Uterus (tissue), 4 donors: ENCODE measurements at regions of chr1 and their contacts with region 1.

Region 1: DNA sequence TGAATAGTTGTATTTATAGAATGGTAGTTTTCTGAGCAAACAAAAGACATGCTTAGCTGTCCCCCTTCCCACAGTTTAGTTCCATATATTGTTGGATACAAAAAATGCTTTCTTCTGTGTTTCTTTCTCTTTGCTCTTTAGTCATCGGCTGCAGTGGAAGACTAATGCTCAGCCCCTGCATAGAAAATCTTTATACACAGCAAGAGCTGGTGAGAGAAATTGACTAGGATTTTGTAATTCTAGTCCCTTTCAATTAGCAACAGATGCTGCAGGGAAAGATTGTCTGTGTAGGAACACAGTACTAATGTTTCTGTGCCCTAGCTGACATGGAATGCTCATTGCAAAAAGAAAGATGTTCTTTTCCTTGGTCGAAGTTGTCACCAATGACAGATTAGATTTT is 200.9 kb downstream of the RPS6KC1 start:
- DNase-seq: no peak
- H3K4me3 ChIP-seq: no peak overlapping the region
- H3K27ac ChIP-seq: no peak overlapping the region
- H3K4me1 ChIP-seq: no peaks in the 10 kb centered on the region
- H3K27me3 ChIP-seq: no peaks in the 10 kb centered on the region
- CTCF ChIP-seq: no peak
- POLR2A ChIP-seq: no peak

Region 2: GRCh38 chr1:212035123-212035834 is 1216.7 kb before region 1 on chr1 and contains the starts of genes DTL and INTS7:
- intact Hi-C with region 1: loop called (anchors 5 kb)
- DNase-seq: peak; percentile 98 to 99
- H3K4me3 ChIP-seq: peak within 1 kb of the TSS; percentile 57 to 62
- H3K27ac ChIP-seq: peak within 1 kb of the TSS; percentile 92
- H3K4me1 ChIP-seq: peaks cover 4% of the 10 kb centered on the region in 2 donors
- H3K27me3 ChIP-seq: peaks cover 0 to 3% of the 10 kb centered on the region in 2 donors
- CTCF ChIP-seq: peak; percentile 81 to 97 (median 90)
- POLR2A ChIP-seq: peak in 1 of 2 donors; percentile 52
- total RNA-seq, gene DTL: 0.73 to 16.0 TPM in 2 of 4 donors, not detected in the others
- total RNA-seq, gene INTS7: 8.5 to 26.2 (median 11.4) TPM